ENCODE measurements at regions of chr3 and their contacts with region 1.

Region 1: GRCh38 chr3:156826144-156826895 is at the start of gene LEKR1:
- DNase-seq: peak; percentile 84 to 96 (median 93)
- ATAC-seq: peak; percentile 96
- H3K4me3 ChIP-seq: peak within 1 kb of the TSS; percentile 66 to 69
- H3K27ac ChIP-seq: peak within 1 kb of the TSS; percentile 92 to 94
- H3K4me1 ChIP-seq: peaks cover 0 to 8% of the 10 kb centered on the region in 2 donors
- H3K27me3 ChIP-seq: no peaks in the 10 kb centered on the region
- CTCF ChIP-seq: no peak
- polyA plus RNA-seq, gene LEKR1: 1.6 to 3.8 (median 2.3) TPM

Region 2: DNA sequence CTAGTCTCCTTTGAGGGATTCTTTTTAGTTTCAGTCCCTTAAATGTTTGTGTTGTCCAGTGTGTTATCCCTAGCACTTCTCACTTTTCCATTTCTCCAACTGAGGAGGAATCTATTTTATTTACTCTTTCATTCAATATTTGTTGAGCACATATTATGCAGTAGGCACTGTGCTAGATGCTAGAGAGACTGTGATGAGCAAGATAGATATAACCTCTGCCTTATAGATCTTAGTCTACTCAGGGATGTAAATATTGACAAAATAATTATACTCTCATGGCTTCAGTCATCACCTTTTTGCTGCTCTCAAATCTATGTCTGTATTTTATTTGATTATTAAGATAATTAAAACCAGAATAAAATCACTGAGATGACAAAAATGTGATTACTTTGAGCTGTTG is 100.2 kb after region 1 on chr3:
- intact Hi-C with region 1: no loop called
- DNase-seq: no peak
- ATAC-seq: no peak
- H3K4me3 ChIP-seq: no peak overlapping the region
- H3K27ac ChIP-seq: no peak overlapping the region
- H3K4me1 ChIP-seq: no peaks in the 10 kb centered on the region
- H3K27me3 ChIP-seq: no peaks in the 10 kb centered on the region
- CTCF ChIP-seq: no peak

Region 3: DNA sequence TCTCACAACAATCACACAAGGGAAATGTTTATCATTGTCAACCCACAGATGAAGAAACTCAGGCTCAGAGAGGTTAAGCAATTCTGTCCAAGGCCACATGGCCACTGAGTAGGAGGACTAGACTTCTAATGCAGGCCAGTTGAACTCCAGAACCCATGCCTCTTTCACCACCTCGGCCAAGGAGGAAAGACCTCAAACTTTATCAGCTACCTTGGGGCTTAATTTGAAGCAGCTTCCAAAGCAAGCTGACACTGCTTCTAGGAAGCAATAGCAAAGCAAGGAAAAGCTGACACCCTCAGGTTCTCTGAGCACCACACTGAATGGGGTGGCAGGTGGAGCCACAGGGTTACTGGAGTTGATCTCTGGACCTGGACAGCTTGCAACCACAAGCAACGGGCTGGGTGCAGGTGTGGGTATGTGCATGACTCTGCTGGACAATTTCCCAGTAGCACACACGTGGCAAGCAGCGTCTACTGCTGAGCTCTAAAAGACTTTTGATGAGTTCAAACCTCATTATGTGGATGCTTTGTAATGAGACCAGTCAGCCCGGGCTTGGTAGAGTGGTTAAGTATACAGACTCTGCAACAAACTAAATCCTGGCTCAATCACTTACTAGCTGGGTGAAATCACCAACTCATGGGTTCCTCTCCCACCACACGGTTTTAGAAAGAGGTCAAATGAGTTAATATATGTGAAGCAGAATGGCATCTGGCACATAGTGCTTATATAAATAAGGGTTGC is 310.5 kb after region 1 on chr3:
- intact Hi-C with region 1: loop called in 1 of 2 experiments (anchors 5 kb)
- DNase-seq: peak in 1 of 4 donors; percentile 74
- ATAC-seq: peak; percentile 68
- H3K4me3 ChIP-seq: no peak overlapping the region
- H3K27ac ChIP-seq: peak overlapping the region; percentile 1 to 67
- H3K4me1 ChIP-seq: peaks cover 21 to 46% of the 10 kb centered on the region in 2 donors
- H3K27me3 ChIP-seq: no peaks in the 10 kb centered on the region
- CTCF ChIP-seq: no peak